B cell (primary cell): ENCODE measurements at regions of chrX and their contacts with region 1.

Region 1: GRCh38 chrX:120664081-120664480 is 34.2 kb upstream of the C1GALT1C1 start:
- DNase-seq: peak; percentile 38
- ATAC-seq: no peak
- H3K4me3 ChIP-seq: no peak overlapping the region
- H3K4me3 Mint-ChIP-seq: no peak overlapping the region
- H3K27ac ChIP-seq: no peak overlapping the region
- H3K27ac Mint-ChIP-seq: peak overlapping the region; percentile 12
- H3K4me1 ChIP-seq: no peaks in the 10 kb centered on the region
- H3K4me1 Mint-ChIP-seq: peaks cover 4% of the 10 kb centered on the region
- H3K27me3 ChIP-seq: no peaks in the 10 kb centered on the region
- H3K27me3 Mint-ChIP-seq: no peaks in the 10 kb centered on the region
- CTCF ChIP-seq: peak; percentile 52

Region 2: GRCh38 chrX:120499301-120500072 is 164.6 kb before region 1 on chrX:
- CTCF ChIA-PET with region 1: interaction called, 18 read pairs
- POLR2A ChIA-PET with region 1: no interaction called
- intact Hi-C with region 1: loop called (anchors 1 kb)
- DNase-seq: no peak
- ATAC-seq: no peak
- H3K4me3 ChIP-seq: no peak overlapping the region
- H3K4me3 Mint-ChIP-seq: no peak overlapping the region
- H3K27ac ChIP-seq: no peak overlapping the region
- H3K27ac Mint-ChIP-seq: no peak overlapping the region
- H3K4me1 ChIP-seq: no peaks in the 10 kb centered on the region
- H3K4me1 Mint-ChIP-seq: peaks cover 5% of the 10 kb centered on the region
- H3K27me3 ChIP-seq: no peaks in the 10 kb centered on the region
- H3K27me3 Mint-ChIP-seq: no peaks in the 10 kb centered on the region
- CTCF ChIP-seq: no peak